CD4-positive, alpha-beta memory T cell (primary cell): ENCODE measurements at regions of chrX and their contacts with region 1.

Region 1: GRCh38 chrX:110877326-110877725 is 81.7 kb upstream of the CHRDL1 start:
- DNase-seq: no peak
- H3K4me3 ChIP-seq: no peak overlapping the region
- H3K4me3 Mint-ChIP-seq: no peak overlapping the region
- H3K27ac ChIP-seq: no peak overlapping the region
- H3K27ac Mint-ChIP-seq: no peak overlapping the region
- H3K4me1 ChIP-seq: no peaks in the 10 kb centered on the region
- H3K4me1 Mint-ChIP-seq: no peaks in the 10 kb centered on the region
- H3K27me3 ChIP-seq: no peaks in the 10 kb centered on the region
- H3K27me3 Mint-ChIP-seq: no peaks in the 10 kb centered on the region

Region 2: GRCh38 chrX:110847334-110847733 is 30.0 kb before region 1 on chrX:
- CTCF ChIA-PET with region 1: no interaction called
- POLR2A ChIA-PET with region 1: no interaction called
- intact Hi-C with region 1: loop called (anchors 1 kb)
- DNase-seq: peak in 4 of 5 donors; percentile 38 to 52 (median 51)
- H3K4me3 ChIP-seq: no peak overlapping the region
- H3K4me3 Mint-ChIP-seq: no peak overlapping the region
- H3K27ac ChIP-seq: no peak overlapping the region
- H3K27ac Mint-ChIP-seq: no peak overlapping the region
- H3K4me1 ChIP-seq: no peaks in the 10 kb centered on the region
- H3K4me1 Mint-ChIP-seq: peaks cover 0 to 3% (median 0%) of the 10 kb centered on the region in 4 donors
- H3K27me3 ChIP-seq: no peaks in the 10 kb centered on the region
- H3K27me3 Mint-ChIP-seq: no peaks in the 10 kb centered on the region